ENCODE measurements at regions of chr7 and their contacts with region 1.

Region 1: GRCh38 chr7:137592232-137592896 is 248.8 kb upstream of the PTN start:
- DNase-seq: peak; percentile 46 to 74
- H3K4me3 ChIP-seq: no peak overlapping the region
- H3K27ac ChIP-seq: no peak overlapping the region
- H3K4me1 ChIP-seq: peaks cover 11% of the 10 kb centered on the region
- H3K27me3 ChIP-seq: no peaks in the 10 kb centered on the region
- CTCF ChIP-seq: peak; percentile 91

Region 2: DNA sequence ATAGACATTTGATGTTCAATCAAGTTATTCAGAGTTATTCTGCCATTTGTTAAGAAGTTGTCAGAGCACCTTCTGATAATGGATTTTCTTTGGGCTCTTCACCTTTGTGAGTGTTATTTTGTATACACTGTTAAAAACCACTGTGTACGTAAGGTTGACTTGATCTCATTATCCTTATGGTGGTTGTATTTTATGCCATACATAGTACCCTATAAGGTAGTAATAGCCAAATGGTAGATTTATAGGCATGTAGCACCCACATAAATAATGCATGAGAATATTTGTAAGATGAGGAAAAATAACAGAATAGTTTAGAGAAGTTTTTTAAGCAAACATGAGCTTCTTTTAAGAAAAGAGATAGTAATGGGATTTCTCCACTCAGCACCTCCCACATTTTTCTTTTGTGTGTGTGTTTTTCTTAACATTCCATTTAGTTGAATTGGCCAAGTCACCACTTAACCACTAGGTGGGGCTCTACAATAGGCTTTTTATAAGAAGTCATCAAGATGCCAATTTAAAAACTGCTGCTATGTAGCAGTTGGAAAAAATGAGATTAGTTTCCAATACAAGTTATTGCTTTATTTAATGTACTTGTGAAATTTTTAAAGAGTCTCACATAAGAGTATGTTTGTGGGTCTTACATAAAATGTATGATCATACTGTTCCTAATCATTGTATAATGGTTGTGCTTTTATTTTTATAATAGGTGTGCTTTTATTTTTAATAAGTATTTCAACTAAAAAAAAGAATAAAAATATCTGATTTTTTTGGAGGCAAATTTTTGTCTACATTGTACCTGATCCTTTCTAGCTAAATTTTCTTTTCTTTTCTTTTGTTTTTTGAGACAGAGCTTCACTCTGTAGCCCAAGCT is 1971.1 kb before region 1 on chr7:
- CTCF ChIA-PET with region 1: no interaction called
- POLR2A ChIA-PET with region 1: no interaction called
- intact Hi-C with region 1: loop called (anchors 1 kb)
- DNase-seq: peak; percentile 26 to 75
- H3K4me3 ChIP-seq: no peak overlapping the region
- H3K27ac ChIP-seq: no peak overlapping the region
- H3K4me1 ChIP-seq: no peaks in the 10 kb centered on the region
- H3K27me3 ChIP-seq: no peaks in the 10 kb centered on the region
- CTCF ChIP-seq: peak; percentile 94

Region 3: DNA sequence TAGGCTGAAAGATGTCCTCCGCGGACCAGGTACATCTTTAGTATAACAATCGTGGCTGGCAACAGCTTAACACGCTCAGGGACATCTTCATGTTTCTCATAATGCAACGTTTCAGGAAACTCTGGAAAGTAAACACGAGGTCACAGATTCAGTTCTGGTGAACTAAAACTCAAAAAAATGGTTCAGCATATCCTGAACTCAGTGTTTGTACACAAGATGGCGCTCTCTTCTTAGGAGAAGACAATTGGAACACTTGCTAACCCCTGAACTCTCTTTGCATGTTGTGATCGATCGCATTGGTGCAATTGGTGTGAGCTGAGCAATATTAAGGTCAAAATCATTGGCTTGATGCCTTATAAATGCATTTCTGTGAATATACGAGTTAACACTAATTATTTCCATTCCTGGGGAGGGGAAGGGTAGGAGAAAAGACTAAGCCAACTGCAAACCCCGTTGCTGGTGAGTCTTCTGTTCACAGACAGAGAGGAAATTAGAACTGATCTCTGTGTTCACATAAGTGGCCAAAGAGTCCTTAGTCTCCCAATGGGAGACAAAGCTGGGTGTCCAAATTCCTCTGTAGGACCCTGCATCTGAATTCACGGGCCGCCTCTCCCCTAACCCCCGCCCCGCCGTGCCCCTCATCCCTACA is 1791.2 kb before region 1 on chr7:
- CTCF ChIA-PET with region 1: no interaction called
- POLR2A ChIA-PET with region 1: no interaction called
- intact Hi-C with region 1: loop called (anchors 1 kb)
- DNase-seq: peak; percentile 31 to 72
- H3K4me3 ChIP-seq: no peak overlapping the region; the same call in 1 of the 2 replicates
- H3K27ac ChIP-seq: no peak overlapping the region
- H3K4me1 ChIP-seq: peaks cover 14% of the 10 kb centered on the region
- H3K27me3 ChIP-seq: no peaks in the 10 kb centered on the region
- CTCF ChIP-seq: peak; percentile 94

Region 4: DNA sequence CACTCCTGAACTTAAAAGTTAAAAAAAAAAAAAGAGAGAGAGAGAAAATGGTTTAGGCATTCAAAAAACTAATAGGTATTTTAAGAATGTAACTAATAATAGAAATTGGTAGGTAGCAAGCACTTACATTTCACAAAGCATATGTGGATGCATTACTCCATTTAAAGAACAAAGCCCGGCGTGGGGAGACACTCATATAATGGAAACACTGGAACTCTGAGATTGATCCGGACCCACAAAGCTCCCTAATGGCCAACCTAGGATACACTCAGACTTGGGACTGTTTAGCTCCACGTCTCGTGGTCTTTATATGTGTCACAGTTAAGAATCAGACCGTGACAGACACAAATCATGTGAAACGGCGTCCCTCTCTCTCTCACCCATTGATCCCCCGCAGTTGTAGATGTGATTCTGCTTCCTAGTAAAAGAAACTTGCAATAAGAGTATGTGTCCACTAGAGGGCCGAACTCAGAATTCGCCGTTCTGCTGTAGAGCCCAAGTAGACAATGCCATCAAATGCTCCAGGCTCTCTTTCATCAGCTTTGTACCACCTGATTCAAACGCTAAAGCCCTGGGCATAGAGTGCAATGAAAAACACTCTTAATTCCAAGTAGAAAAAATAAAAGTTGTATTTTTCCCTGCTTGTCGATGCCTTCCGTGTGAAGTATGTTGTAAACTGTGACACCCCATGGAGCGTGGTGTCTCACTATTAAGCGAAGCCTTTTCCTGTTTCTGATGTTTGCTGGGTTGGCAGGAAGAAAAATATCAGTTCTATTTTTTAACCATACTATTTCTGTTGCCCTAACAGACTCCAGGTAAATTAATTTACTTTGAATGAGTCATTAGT is 1186.2 kb before region 1 on chr7:
- CTCF ChIA-PET with region 1: no interaction called
- POLR2A ChIA-PET with region 1: no interaction called
- intact Hi-C with region 1: loop called (anchors 1 kb)
- DNase-seq: peak in 1 of 2 experiments; percentile 38
- H3K4me3 ChIP-seq: no peak overlapping the region
- H3K27ac ChIP-seq: no peak overlapping the region
- H3K4me1 ChIP-seq: no peaks in the 10 kb centered on the region
- H3K27me3 ChIP-seq: no peaks in the 10 kb centered on the region
- CTCF ChIP-seq: peak; percentile 92

Region 5: DNA sequence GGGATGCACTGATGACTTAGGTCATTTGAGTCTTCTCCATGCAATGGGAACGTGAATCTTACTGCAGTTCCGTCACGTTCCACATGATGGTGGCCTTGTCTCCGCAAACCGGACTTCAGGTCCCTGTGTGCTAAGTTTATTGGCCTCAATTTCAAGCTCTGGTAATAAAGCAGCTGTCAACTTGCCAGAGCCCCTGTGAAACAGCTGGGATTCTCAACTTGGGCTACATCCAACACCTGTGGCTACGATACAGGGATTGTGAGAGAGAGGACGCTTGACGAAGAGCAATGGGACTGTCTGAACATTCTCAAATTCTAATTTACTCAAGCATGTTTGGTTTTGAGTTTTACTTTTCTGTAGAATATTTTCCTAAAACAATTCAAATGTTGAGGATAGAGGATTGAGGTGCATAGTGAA is 423.1 kb before region 1 on chr7:
- CTCF ChIA-PET with region 1: no interaction called
- POLR2A ChIA-PET with region 1: no interaction called
- intact Hi-C with region 1: loop called (anchors 1 kb)
- DNase-seq: peak in 1 of 2 experiments; percentile 32
- H3K4me3 ChIP-seq: no peak overlapping the region
- H3K27ac ChIP-seq: no peak overlapping the region
- H3K4me1 ChIP-seq: no peaks in the 10 kb centered on the region
- H3K27me3 ChIP-seq: no peaks in the 10 kb centered on the region
- CTCF ChIP-seq: peak; percentile 63

Region 6: GRCh38 chr7:137331378-137331777 is 261.0 kb before region 1 on chr7:
- CTCF ChIA-PET with region 1: no interaction called
- POLR2A ChIA-PET with region 1: no interaction called
- intact Hi-C with region 1: no loop called
- DNase-seq: no peak
- H3K4me3 ChIP-seq: no peak overlapping the region
- H3K27ac ChIP-seq: no peak overlapping the region
- H3K4me1 ChIP-seq: no peaks in the 10 kb centered on the region
- H3K27me3 ChIP-seq: no peaks in the 10 kb centered on the region
- CTCF ChIP-seq: no peak

Region 7: DNA sequence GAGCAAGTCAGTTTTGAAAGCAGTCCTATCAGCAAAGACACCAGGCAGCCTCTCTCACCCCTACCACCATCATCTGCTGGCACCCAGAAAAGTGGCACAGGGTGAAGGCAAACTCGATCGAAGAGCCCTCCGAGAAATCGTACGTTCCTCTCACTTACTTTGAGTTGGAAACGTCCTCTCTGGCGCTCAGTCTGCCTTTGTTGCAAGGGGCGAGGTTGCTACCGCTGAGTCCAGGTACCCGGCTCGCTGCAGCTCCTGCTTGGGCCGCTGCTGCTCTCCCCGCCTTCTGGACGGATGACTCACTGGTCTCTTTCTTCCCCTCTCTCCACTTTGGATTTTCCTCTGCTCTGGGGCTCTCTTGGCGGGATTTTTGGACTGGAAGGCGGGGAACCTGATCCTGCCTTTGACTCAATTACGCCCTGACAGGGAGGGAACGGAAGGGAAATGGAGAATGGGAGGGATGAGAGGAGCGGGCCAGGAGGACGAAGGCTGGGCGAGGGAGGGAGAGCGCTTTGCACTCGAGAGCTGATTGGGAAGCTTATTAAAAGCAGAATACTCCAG is 249.0 kb before region 1 on chr7 and contains the start of gene PTN:
- CTCF ChIA-PET with region 1: no interaction called
- POLR2A ChIA-PET with region 1: no interaction called
- intact Hi-C with region 1: loop called (anchors 5 kb)
- DNase-seq: peak in 1 of 2 experiments; percentile 56
- H3K4me3 ChIP-seq: no peak within 1 kb of the TSS
- H3K27ac ChIP-seq: no peak within 1 kb of the TSS
- H3K4me1 ChIP-seq: no peaks in the 10 kb centered on the region
- H3K27me3 ChIP-seq: peaks cover 19% of the 10 kb centered on the region; the same call in 1 of the 2 replicates
- CTCF ChIP-seq: no peak
- total RNA-seq, gene PTN: 4.5 and 7.0 TPM in 2 replicates

Region 8: DNA sequence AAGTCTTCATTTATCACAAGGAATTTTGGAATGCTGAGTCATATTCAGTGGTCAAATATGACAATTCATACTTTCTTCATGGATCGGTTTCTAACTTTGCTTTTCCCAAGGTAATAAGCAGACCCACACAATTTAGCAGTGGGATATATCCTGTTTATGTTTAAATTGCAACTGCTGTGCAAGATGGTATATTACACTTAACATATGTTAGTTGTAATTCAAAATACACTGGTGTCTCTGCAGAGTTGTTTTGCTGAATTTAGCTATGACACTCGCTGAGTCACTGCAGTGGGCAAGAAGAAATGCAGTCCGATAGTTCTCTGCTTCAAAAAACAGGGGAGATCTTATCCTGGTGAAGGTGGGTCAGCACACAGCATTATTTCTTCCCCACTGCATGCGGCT is 54.0 kb before region 1 on chr7:
- CTCF ChIA-PET with region 1: no interaction called
- POLR2A ChIA-PET with region 1: interaction called, 12 read pairs
- intact Hi-C with region 1: no loop called
- DNase-seq: peak in 1 of 2 experiments; percentile 25
- H3K4me3 ChIP-seq: no peak overlapping the region
- H3K27ac ChIP-seq: no peak overlapping the region
- H3K4me1 ChIP-seq: peaks cover 4% of the 10 kb centered on the region; the same call in 1 of the 2 replicates
- H3K27me3 ChIP-seq: no peaks in the 10 kb centered on the region
- CTCF ChIP-seq: no peak

Region 9: DNA sequence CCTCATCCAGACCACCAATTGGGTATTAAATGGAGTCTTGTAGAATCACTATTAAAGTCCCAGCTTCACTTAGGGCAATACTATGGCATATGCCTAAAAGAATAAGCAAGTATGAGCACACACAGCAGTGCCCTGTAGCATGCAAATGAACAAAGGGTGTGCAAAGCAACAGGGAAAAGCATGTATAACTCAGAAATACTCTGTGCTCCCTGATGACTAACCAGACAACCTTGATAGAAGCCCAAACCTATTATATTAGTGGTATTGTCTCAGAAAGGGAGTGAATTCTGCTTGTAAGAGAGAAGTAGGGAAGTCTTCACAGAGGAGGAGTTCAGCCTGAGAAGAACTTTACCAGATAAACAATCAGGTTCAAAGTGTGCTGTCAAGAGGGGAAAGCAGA is 123.2 kb after region 1 on chr7:
- CTCF ChIA-PET with region 1: no interaction called
- POLR2A ChIA-PET with region 1: no interaction called
- intact Hi-C with region 1: no loop called
- DNase-seq: no peak
- H3K4me3 ChIP-seq: no peak overlapping the region
- H3K27ac ChIP-seq: no peak overlapping the region
- H3K4me1 ChIP-seq: no peaks in the 10 kb centered on the region
- H3K27me3 ChIP-seq: peaks cover 56% of the 10 kb centered on the region
- CTCF ChIP-seq: no peak

Measured in PC-9 (cell line).